ENCODE measurements at regions of chr12 and their contacts with region 1.

Region 1: GRCh38 chr12:46124848-46125619 is 134.7 kb upstream of the SCAF11 start:
- DNase-seq: peak; percentile 92
- H3K4me3 ChIP-seq: peak overlapping the region; percentile 18
- H3K27ac ChIP-seq: peak overlapping the region; percentile 3
- H3K4me1 ChIP-seq: no peaks in the 10 kb centered on the region
- H3K27me3 ChIP-seq: no peaks in the 10 kb centered on the region
- CTCF ChIP-seq: peak; percentile 93

Region 2: DNA sequence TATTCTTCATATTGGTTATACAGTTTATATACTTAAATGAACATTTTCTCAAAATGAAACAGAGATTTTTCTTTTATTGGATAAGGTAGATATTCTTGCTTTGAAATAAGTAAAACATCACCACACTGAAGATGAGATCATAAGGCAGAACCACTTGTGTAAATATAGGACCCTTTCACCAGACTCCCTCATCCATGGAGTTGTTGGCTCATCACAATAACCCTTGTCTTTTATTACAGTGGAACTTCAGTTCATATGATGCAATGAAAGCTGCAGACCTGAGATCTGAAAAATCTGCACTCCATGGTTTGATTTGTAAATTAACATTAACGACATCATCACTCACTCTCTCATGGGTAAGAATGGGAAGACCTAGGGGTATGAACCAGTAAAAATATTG is 1022.2 kb before region 1 on chr12:
- CTCF ChIA-PET with region 1: no interaction called
- POLR2A ChIA-PET with region 1: no interaction called
- intact Hi-C with region 1: no loop called
- DNase-seq: no peak
- H3K4me3 ChIP-seq: no peak overlapping the region
- H3K27ac ChIP-seq: no peak overlapping the region
- H3K4me1 ChIP-seq: no peaks in the 10 kb centered on the region
- H3K27me3 ChIP-seq: peaks cover 35% of the 10 kb centered on the region
- CTCF ChIP-seq: no peak

Region 3: GRCh38 chr12:46111727-46112126 is 13.3 kb before region 1 on chr12:
- CTCF ChIA-PET with region 1: interaction called, 16 read pairs
- POLR2A ChIA-PET with region 1: no interaction called
- intact Hi-C with region 1: no loop called
- DNase-seq: no peak
- H3K4me3 ChIP-seq: no peak overlapping the region
- H3K27ac ChIP-seq: no peak overlapping the region
- H3K4me1 ChIP-seq: no peaks in the 10 kb centered on the region
- H3K27me3 ChIP-seq: no peaks in the 10 kb centered on the region
- CTCF ChIP-seq: no peak

Region 4: GRCh38 chr12:46933947-46934346 is 808.9 kb after region 1 on chr12:
- CTCF ChIA-PET with region 1: no interaction called
- POLR2A ChIA-PET with region 1: no interaction called
- intact Hi-C with region 1: loop called (anchors 5 kb)
- DNase-seq: peak; percentile 74
- H3K4me3 ChIP-seq: no peak overlapping the region
- H3K27ac ChIP-seq: peak overlapping the region; percentile 45
- H3K4me1 ChIP-seq: peaks cover 3% of the 10 kb centered on the region
- H3K27me3 ChIP-seq: no peaks in the 10 kb centered on the region
- CTCF ChIP-seq: peak; percentile 73